Right ventricle myocardium superior (tissue), 1 donor: ENCODE measurements at regions of chr10 and their contacts with region 1.

Region 1: GRCh38 chr10:22251751-22252223 is 34.0 kb upstream of the EBLN1 start:
- DNase-seq: peak; percentile 82
- ATAC-seq: peak; percentile 67

Region 2: GRCh38 chr10:21584834-21585530 is 666.8 kb before region 1 on chr10:
- intact Hi-C with region 1: no loop called
- DNase-seq: no peak
- ATAC-seq: no peak

Region 3: GRCh38 chr10:22316285-22317120 is 64.7 kb after region 1 on chr10 and contains the start of gene COMMD3:
- intact Hi-C with region 1: loop called (anchors 5 kb)
- DNase-seq: peak; percentile 94
- ATAC-seq: peak; percentile 93
- total RNA-seq, gene COMMD3: 87.0 TPM

Region 4: DNA sequence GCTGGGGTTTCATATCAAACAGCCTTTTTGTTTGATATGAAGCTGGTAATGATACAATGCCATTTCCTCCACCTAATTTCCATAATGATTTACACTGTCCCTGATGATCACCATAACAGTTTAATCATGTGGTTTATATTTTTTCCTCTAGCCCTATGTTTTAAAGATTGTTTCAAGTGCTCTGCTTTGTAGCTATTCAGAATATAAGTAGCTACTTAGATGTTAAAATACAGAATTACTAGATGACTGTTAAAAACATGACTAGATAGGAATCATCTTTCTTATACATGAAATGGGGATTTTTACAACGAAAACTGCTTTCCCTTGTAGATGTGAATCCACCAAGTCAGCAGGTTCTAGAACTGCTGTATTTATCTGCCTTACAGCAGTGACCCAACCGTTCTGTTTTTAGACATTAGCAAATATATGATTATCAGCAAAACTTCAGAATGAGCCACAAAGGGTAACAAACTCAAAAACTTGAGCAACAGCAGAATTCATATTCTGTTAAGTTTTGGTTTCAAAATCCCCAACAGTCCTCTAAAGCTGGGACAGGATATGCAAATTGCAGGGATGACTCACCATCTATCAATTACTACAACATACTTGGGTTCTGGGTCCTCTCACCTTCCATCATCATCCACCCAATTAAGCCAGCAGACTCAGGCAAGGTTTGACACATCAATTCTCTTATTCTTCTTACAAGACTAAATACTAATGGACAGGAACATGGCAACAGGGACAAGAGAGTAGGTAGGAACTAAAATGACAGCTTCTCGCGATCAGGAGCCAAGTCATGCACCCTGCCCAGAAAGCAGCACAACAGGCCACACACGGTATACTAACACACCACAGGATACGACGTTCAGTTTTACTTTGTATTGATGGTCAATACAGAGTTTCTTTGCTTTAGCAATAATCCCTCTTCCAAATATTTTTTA is 378.7 kb after region 1 on chr10:
- intact Hi-C with region 1: no loop called
- DNase-seq: no peak
- ATAC-seq: peak; percentile 56